Calu3 (cell line): ENCODE measurements at regions of chr9 and their contacts with region 1.

Region 1: GRCh38 chr9:105157130-105157583 is 87.3 kb upstream of the SLC44A1 start:
- DNase-seq: peak; percentile 28
- H3K4me3 Mint-ChIP-seq: no peak overlapping the region
- H3K27ac Mint-ChIP-seq: no peak overlapping the region
- H3K4me1 Mint-ChIP-seq: no peaks in the 10 kb centered on the region
- H3K27me3 Mint-ChIP-seq: no peaks in the 10 kb centered on the region
- CTCF ChIP-seq: peak; percentile 15

Region 2: DNA sequence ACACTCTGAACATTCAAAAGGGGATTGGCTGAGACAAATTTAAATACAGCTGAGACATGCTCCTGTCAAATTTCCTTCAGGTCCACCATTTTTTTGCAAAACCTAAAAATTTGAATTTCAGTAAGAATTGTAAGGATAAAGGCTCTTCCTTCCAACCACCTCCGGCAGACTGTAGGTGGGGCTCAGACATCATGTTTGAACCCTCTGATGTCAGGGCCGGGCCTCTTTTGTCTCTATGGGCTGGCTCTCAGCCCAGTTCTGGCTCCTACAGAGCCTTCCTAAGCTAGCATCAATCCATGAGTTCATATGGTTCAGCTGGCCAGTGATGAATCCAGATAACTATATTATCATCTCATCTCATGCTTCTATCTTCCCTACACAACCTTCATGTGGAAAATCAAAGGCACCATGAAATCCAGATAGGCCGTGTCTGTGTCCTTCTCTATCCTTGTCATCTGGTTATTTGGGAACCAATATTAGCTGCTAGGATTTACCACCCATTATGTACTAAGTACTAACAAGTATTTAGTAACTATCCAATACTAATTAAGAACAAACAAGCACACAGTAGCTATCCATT is 349.0 kb before region 1 on chr9:
- CTCF ChIA-PET with region 1: no interaction called
- intact Hi-C with region 1: loop called (anchors 1 kb)
- DNase-seq: peak; percentile 8
- H3K4me3 Mint-ChIP-seq: no peak overlapping the region
- H3K27ac Mint-ChIP-seq: no peak overlapping the region
- H3K4me1 Mint-ChIP-seq: peaks cover 22% of the 10 kb centered on the region
- H3K27me3 Mint-ChIP-seq: no peaks in the 10 kb centered on the region
- CTCF ChIP-seq: no peak

Region 3: DNA sequence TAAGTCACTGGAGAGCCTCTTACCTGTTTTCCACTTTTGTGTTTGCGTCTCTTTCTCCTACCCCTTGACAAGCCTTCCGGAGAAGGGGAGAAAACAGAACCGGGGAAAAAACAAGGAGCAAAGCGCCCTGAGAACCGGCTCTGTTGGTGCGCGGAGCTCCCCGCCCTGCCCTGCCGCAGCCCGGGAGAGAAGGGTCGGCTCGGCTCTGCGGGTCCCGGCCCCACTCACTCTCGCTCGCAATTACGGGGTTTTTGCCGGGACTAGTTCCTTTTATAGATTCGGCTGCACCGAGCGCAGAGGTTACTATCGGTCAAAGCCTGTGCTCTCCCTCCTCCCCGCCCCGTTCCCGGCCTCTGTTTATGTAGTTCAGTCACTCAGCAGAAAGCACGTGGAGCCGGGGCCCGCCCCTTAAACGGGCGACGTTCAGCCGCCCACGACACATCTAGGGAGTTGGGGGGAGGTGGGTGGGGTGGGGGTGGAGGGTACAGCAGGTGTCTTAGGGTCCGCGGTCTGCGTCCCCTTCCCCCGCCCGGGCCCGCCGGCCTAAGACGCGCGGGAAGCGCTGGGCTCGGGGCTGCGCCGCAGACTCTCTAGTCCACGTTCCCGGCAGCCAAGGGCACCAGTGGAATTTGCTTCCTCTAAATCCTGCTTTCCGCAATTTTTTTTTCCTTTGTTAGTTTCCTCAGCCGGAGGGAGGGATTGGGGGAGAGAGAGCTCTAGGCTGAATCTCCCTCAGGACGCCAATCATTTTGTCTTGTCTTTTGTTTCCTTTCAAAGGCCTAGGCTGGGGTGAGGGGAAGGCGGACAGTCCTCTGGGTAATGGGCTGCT is 229.0 kb before region 1 on chr9 and contains the start of gene ABCA1:
- CTCF ChIA-PET with region 1: no interaction called
- intact Hi-C with region 1: loop called (anchors 2 kb)
- DNase-seq: peak; percentile 52
- H3K4me3 Mint-ChIP-seq: peak within 1 kb of the TSS; percentile 73
- H3K27ac Mint-ChIP-seq: no peak within 1 kb of the TSS
- H3K4me1 Mint-ChIP-seq: no peaks in the 10 kb centered on the region
- H3K27me3 Mint-ChIP-seq: no peaks in the 10 kb centered on the region
- CTCF ChIP-seq: no peak
- total RNA-seq, gene ABCA1: 0.76 and 0.78 TPM in 2 replicates

Region 4: GRCh38 chr9:105064315-105065097 is 92.7 kb before region 1 on chr9:
- CTCF ChIA-PET with region 1: no interaction called
- intact Hi-C with region 1: loop called (anchors 5 kb)
- DNase-seq: peak; percentile 61
- H3K4me3 Mint-ChIP-seq: no peak overlapping the region
- H3K27ac Mint-ChIP-seq: peak overlapping the region; percentile 63
- H3K4me1 Mint-ChIP-seq: peaks cover 21% of the 10 kb centered on the region
- H3K27me3 Mint-ChIP-seq: no peaks in the 10 kb centered on the region
- CTCF ChIP-seq: no peak

Region 5: DNA sequence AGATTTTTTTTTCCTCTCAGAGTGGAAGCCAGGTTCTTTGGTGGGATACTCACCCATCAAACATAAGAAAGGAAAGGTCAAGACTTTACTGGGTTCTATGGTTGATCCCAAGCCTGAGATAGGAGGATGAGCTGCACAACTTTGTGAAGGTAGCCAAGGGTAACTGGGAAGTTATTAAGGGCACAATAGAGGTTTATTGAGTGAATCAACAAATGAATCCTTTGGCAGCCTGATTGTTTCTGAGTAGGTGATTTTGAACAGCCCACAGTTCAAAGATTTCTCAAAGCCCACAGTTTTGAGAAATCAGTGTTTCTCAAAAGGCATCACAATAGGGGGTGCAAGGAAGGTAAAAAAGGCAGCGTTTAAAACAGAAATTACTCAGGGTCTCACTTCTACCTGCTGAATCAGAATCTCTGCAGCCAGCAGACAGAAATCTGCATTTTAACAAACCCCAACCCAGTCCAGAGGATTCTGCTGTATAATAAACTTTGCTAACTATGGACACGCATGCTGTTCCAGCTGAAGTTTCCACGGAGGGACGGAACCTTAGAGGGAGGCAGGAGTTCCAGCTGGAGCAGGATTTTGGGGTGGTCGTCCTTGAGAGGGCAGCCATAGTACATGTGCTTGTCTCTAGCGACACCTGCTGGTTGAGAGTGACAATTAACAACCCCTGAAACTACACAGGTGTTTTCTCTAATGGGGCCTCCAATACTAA is 257.9 kb after region 1 on chr9:
- CTCF ChIA-PET with region 1: no interaction called
- intact Hi-C with region 1: loop called (anchors 1 kb)
- DNase-seq: peak; percentile 41
- H3K4me3 Mint-ChIP-seq: no peak overlapping the region
- H3K27ac Mint-ChIP-seq: no peak overlapping the region
- H3K4me1 Mint-ChIP-seq: no peaks in the 10 kb centered on the region
- H3K27me3 Mint-ChIP-seq: no peaks in the 10 kb centered on the region
- CTCF ChIP-seq: peak; percentile 78